MCF 10A (cell line): ENCODE measurements at regions of chr1 and their contacts with region 1.

Region 1: GRCh38 chr1:236868625-236869467 is 73.8 kb downstream of the MTR start:
- DNase-seq: peak; percentile 76
- H3K4me3 Mint-ChIP-seq: no peak overlapping the region
- H3K27ac Mint-ChIP-seq: no peak overlapping the region
- H3K4me1 Mint-ChIP-seq: peaks cover 5% of the 10 kb centered on the region
- H3K27me3 Mint-ChIP-seq: no peaks in the 10 kb centered on the region
- CTCF ChIP-seq: peak; percentile 99

Region 2: DNA sequence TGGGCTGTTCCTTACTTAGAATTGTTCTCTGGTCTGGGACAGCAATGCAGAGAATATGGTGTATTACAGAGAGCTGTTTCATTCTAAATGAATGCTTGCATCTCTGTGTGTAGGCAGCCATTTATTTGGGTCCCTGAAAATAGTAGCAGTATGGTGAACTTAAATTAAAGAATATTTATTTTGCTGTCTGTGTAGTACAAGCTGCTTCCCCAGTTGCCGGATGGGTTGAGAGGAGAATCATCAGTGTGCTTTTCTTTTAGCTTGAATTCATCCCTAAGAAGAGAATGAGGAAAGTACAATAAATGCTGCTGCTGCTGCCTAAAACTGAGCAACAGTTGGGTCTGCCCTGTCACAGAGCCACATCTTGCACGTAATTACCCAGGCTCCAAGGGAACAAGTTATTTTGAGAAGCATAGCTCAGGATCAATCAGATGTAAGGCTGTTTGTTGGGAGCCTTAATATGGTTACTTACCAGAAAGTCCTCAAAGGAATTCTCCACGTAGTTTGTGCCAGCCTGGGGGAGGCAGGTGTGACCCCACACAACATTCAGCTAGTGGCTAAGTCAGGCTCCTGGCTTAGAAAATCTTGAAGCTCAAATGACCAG is 166.0 kb before region 1 on chr1:
- CTCF ChIA-PET with region 1: no interaction called
- POLR2A ChIA-PET with region 1: no interaction called
- intact Hi-C with region 1: no loop called
- DNase-seq: no peak
- H3K4me3 Mint-ChIP-seq: no peak overlapping the region
- H3K27ac Mint-ChIP-seq: no peak overlapping the region
- H3K4me1 Mint-ChIP-seq: no peaks in the 10 kb centered on the region
- H3K27me3 Mint-ChIP-seq: no peaks in the 10 kb centered on the region
- CTCF ChIP-seq: no peak

Region 3: DNA sequence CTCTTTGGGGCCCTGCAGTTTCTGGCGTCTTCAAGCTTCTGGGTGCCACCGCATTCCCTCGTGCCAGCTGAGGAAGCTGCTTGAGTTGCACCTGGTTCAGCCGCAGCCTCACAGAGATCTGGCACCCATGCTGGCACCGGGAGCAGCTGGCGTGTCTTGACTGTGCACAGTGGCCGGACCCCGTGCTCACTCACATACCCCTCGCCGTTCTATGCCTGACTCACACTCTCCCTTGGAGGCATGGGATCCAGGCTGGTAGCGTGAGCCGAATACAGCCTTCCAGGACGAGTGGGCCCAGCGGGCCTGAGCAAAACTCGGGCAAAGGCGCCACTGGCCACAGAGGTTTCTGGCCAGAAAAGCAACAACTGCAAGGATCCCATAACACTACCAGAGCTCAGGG is 82.4 kb before region 1 on chr1:
- CTCF ChIA-PET with region 1: no interaction called
- POLR2A ChIA-PET with region 1: no interaction called
- intact Hi-C with region 1: no loop called
- DNase-seq: no peak
- H3K4me3 Mint-ChIP-seq: no peak overlapping the region
- H3K27ac Mint-ChIP-seq: no peak overlapping the region
- H3K4me1 Mint-ChIP-seq: no peaks in the 10 kb centered on the region
- H3K27me3 Mint-ChIP-seq: peaks cover 13% of the 10 kb centered on the region
- CTCF ChIP-seq: no peak

Region 4: DNA sequence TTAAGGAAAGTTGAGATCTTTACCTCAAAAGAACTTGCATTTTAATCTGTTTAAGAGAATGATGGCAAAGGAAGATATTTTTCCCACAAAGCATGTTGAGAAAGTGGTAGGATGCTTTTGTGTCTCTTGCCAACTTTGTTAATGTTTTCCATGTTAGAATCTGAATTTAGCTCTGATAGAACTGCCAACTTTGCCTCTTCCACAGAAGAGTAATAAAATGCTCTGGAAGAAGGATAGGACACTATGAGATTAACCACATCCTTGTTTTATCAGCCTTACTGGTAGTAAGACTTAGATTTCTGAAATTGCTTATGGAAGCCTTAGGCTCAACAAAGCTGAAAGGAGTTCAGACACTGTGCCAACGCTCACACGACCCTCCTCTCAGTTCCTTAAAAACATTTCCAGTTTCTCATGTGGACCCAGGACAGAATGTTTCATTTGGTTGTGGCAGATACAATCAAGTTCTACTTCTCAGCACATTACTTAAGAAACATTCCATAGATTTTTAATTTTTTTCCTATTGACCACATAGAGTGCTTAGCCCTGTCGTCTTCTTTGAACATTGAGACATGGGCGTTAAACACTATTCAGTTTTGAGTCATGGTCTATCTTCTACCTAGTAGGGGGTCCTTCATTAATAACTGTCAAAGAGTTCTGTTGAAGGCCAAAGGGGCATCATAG is 14.8 kb before region 1 on chr1:
- CTCF ChIA-PET with region 1: interaction called, 23 read pairs
- POLR2A ChIA-PET with region 1: interaction called, 5 read pairs
- intact Hi-C with region 1: no loop called
- DNase-seq: no peak
- H3K4me3 Mint-ChIP-seq: peak overlapping the region; percentile 28
- H3K27ac Mint-ChIP-seq: peak overlapping the region; percentile 86
- H3K4me1 Mint-ChIP-seq: peaks cover 13% of the 10 kb centered on the region
- H3K27me3 Mint-ChIP-seq: no peaks in the 10 kb centered on the region
- CTCF ChIP-seq: no peak

Region 5: GRCh38 chr1:236880209-236880608 is 11.4 kb after region 1 on chr1:
- CTCF ChIA-PET with region 1: interaction called, 36 read pairs
- POLR2A ChIA-PET with region 1: interaction called, 3 read pairs
- intact Hi-C with region 1: no loop called
- DNase-seq: no peak
- H3K4me3 Mint-ChIP-seq: no peak overlapping the region
- H3K27ac Mint-ChIP-seq: no peak overlapping the region
- H3K4me1 Mint-ChIP-seq: no peaks in the 10 kb centered on the region
- H3K27me3 Mint-ChIP-seq: no peaks in the 10 kb centered on the region
- CTCF ChIP-seq: no peak

Region 6: GRCh38 chr1:236888126-236888525 is 19.3 kb after region 1 on chr1:
- CTCF ChIA-PET with region 1: interaction called, 36 read pairs
- POLR2A ChIA-PET with region 1: no interaction called
- intact Hi-C with region 1: no loop called
- DNase-seq: no peak
- H3K4me3 Mint-ChIP-seq: no peak overlapping the region
- H3K27ac Mint-ChIP-seq: no peak overlapping the region
- H3K4me1 Mint-ChIP-seq: no peaks in the 10 kb centered on the region
- H3K27me3 Mint-ChIP-seq: no peaks in the 10 kb centered on the region
- CTCF ChIP-seq: no peak

Region 7: GRCh38 chr1:236893626-236894545 is 25.0 kb after region 1 on chr1:
- CTCF ChIA-PET with region 1: interaction called, 21 read pairs
- POLR2A ChIA-PET with region 1: no interaction called
- intact Hi-C with region 1: no loop called
- DNase-seq: no peak
- H3K4me3 Mint-ChIP-seq: no peak overlapping the region
- H3K27ac Mint-ChIP-seq: no peak overlapping the region
- H3K4me1 Mint-ChIP-seq: no peaks in the 10 kb centered on the region
- H3K27me3 Mint-ChIP-seq: no peaks in the 10 kb centered on the region
- CTCF ChIP-seq: no peak